CD4-positive, alpha-beta memory T cell (primary cell): ENCODE measurements at regions of chr1 and their contacts with region 1.

Region 1: GRCh38 chr1:8671306-8671917 is 146.0 kb downstream of the RERE start:
- DNase-seq: peak in 4 of 5 donors; percentile 12 to 34 (median 25)
- H3K4me3 ChIP-seq: no peak overlapping the region
- H3K4me3 Mint-ChIP-seq: no peak overlapping the region
- H3K27ac ChIP-seq: no peak overlapping the region
- H3K27ac Mint-ChIP-seq: peak overlapping the region in 1 of 7 donors; percentile 60
- H3K4me1 ChIP-seq: peaks cover 24% of the 10 kb centered on the region
- H3K4me1 Mint-ChIP-seq: peaks cover 15 to 31% (median 20%) of the 10 kb centered on the region in 4 donors
- H3K27me3 ChIP-seq: no peaks in the 10 kb centered on the region
- H3K27me3 Mint-ChIP-seq: no peaks in the 10 kb centered on the region

Region 2: GRCh38 chr1:8497210-8497801 is 174.1 kb before region 1 on chr1:
- CTCF ChIA-PET with region 1: no interaction called
- POLR2A ChIA-PET with region 1: no interaction called
- intact Hi-C with region 1: no loop called
- DNase-seq: no peak
- H3K4me3 ChIP-seq: no peak overlapping the region
- H3K4me3 Mint-ChIP-seq: no peak overlapping the region
- H3K27ac ChIP-seq: no peak overlapping the region
- H3K27ac Mint-ChIP-seq: peak overlapping the region in 4 of 7 donors; percentile 37 to 71 (median 46)
- H3K4me1 ChIP-seq: no peaks in the 10 kb centered on the region
- H3K4me1 Mint-ChIP-seq: peaks cover 3 to 5% (median 4%) of the 10 kb centered on the region in 4 donors
- H3K27me3 ChIP-seq: no peaks in the 10 kb centered on the region
- H3K27me3 Mint-ChIP-seq: no peaks in the 10 kb centered on the region

Region 3: GRCh38 chr1:8525558-8526275 is 145.7 kb before region 1 on chr1:
- CTCF ChIA-PET with region 1: no interaction called
- POLR2A ChIA-PET with region 1: no interaction called
- intact Hi-C with region 1: no loop called
- DNase-seq: peak; percentile 79 to 93 (median 85)
- H3K4me3 ChIP-seq: peak overlapping the region; percentile 44 to 63
- H3K4me3 Mint-ChIP-seq: no peak overlapping the region
- H3K27ac ChIP-seq: peak overlapping the region; percentile 78
- H3K27ac Mint-ChIP-seq: no peak overlapping the region
- H3K4me1 ChIP-seq: peaks cover 38% of the 10 kb centered on the region
- H3K4me1 Mint-ChIP-seq: peaks cover 21 to 43% (median 32%) of the 10 kb centered on the region in 4 donors
- H3K27me3 ChIP-seq: no peaks in the 10 kb centered on the region
- H3K27me3 Mint-ChIP-seq: no peaks in the 10 kb centered on the region

Region 4: DNA sequence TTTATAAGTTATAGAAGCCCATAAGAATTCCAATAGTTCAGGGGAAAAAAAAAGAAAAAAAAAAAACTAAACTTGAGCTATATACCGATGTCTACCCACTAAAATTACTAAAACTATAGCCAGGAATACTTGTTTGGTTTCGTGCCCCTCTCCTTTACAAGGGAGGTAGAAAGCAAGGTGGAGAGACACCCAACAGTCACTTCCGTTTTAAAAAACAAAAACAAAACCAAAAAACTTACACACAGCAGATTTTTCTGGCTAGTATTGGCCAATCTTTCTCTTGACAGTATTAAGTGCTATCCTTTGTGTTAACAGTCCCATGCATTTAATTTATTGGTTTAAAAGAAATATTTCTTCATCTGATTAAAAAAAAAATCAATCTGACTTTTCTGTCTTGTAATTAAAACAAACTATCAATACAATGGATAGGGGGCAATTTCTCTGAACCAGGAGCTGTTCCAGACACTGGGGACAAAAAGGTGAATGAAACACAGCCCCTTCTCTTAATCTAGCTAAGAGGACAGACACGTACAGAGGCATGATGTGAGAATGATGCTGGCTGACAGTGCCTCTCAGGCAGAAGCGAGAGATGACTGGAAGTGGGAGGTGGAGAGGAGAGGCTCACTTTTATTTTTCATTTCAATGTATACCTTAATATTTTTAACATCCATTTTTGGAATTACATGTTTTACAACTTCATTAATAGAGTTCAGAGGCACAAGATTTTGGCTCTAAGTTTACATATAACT is 68.8 kb before region 1 on chr1:
- CTCF ChIA-PET with region 1: interaction called, 12 read pairs
- POLR2A ChIA-PET with region 1: no interaction called
- intact Hi-C with region 1: no loop called
- DNase-seq: peak in 2 of 5 donors; percentile 23 to 27
- H3K4me3 ChIP-seq: no peak overlapping the region
- H3K4me3 Mint-ChIP-seq: peak overlapping the region; percentile 8 to 82 (median 74)
- H3K27ac ChIP-seq: no peak overlapping the region
- H3K27ac Mint-ChIP-seq: peak overlapping the region; percentile 36 to 94 (median 74)
- H3K4me1 ChIP-seq: peaks cover 36% of the 10 kb centered on the region
- H3K4me1 Mint-ChIP-seq: peaks cover 23 to 38% (median 30%) of the 10 kb centered on the region in 4 donors
- H3K27me3 ChIP-seq: no peaks in the 10 kb centered on the region
- H3K27me3 Mint-ChIP-seq: no peaks in the 10 kb centered on the region